ENCODE measurements at regions of chr15 and their contacts with region 1.

Region 1: GRCh38 chr15:85742186-85742821 is 52.4 kb downstream of the KLHL25 start:
- DNase-seq: no peak
- H3K4me3 ChIP-seq: no peak overlapping the region
- H3K27ac ChIP-seq: no peak overlapping the region
- H3K4me1 ChIP-seq: no peaks in the 10 kb centered on the region
- H3K27me3 ChIP-seq: no peaks in the 10 kb centered on the region
- CTCF ChIP-seq: no peak
- POLR2A ChIP-seq: no peak

Region 2: GRCh38 chr15:85794603-85795336 is 52.5 kb after region 1 on chr15 and contains the start of gene KLHL25:
- intact Hi-C with region 1: loop called (anchors 5 kb)
- DNase-seq: peak; percentile 95
- H3K4me3 ChIP-seq: peak within 1 kb of the TSS; percentile 85 to 92
- H3K27ac ChIP-seq: peak within 1 kb of the TSS; percentile 80 to 85
- H3K4me1 ChIP-seq: no peaks in the 10 kb centered on the region
- H3K27me3 ChIP-seq: no peaks in the 10 kb centered on the region
- CTCF ChIP-seq: peak in 1 of 4 experiments; percentile 8
- POLR2A ChIP-seq: peak; percentile 98
- total RNA-seq, gene KLHL25: 5.1 to 30.8 TPM

Region 3: DNA sequence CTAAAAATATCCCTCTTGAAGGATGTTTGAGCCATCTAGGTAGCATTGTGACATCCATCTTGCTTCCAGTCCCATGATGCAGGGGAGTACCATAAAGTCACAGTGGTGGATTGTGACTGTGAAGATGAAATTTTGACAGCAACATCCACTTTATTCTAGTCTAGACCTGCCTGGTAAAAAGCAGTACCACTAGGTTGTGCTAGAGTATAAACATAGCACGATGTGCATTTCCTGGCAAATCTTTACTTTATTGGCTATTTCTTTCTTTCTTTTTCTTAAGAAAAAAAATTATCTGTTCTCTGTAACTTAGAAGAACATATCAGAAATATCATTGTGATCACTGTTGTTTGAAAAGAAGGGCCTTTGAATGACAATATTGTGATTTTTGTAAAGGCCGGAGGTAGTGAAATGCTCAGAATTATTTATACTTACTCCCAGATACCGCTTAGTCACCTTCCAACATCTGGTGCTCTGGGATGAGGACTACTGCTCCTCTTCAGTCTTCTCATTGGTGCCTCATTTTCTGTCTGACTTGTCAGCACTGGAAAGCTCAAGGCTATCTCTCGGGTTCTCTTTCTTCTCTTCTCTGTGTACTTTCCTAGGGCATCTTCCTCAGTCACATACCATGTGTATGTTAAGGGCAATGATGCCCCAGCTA is 373.0 kb after region 1 on chr15:
- intact Hi-C with region 1: no loop called
- DNase-seq: no peak
- H3K4me3 ChIP-seq: no peak overlapping the region
- H3K27ac ChIP-seq: no peak overlapping the region
- H3K4me1 ChIP-seq: no peaks in the 10 kb centered on the region
- H3K27me3 ChIP-seq: no peaks in the 10 kb centered on the region
- CTCF ChIP-seq: peak in 3 of 4 experiments; percentile 24 to 28 (median 25)
- POLR2A ChIP-seq: no peak